ENCODE measurements at regions of chr6 and their contacts with region 1.

Region 1: GRCh38 chr6:16698997-16699868 is 62.0 kb downstream of the ATXN1 start:
- DNase-seq: peak; percentile 71
- H3K4me3 Mint-ChIP-seq: peak overlapping the region; percentile 71
- H3K27ac Mint-ChIP-seq: peak overlapping the region; percentile 95
- H3K4me1 Mint-ChIP-seq: peaks cover 68% of the 10 kb centered on the region
- H3K27me3 Mint-ChIP-seq: no peaks in the 10 kb centered on the region

Region 2: GRCh38 chr6:16731478-16732051 is 32.3 kb after region 1 on chr6:
- intact Hi-C with region 1: loop called (anchors 1 kb)
- DNase-seq: peak; percentile 80
- H3K4me3 Mint-ChIP-seq: peak overlapping the region; percentile 69
- H3K27ac Mint-ChIP-seq: peak overlapping the region; percentile 76
- H3K4me1 Mint-ChIP-seq: peaks cover 62% of the 10 kb centered on the region
- H3K27me3 Mint-ChIP-seq: no peaks in the 10 kb centered on the region

Region 3: GRCh38 chr6:16854986-16855385 is 155.8 kb after region 1 on chr6:
- intact Hi-C with region 1: no loop called
- DNase-seq: no peak
- H3K4me3 Mint-ChIP-seq: no peak overlapping the region
- H3K27ac Mint-ChIP-seq: no peak overlapping the region
- H3K4me1 Mint-ChIP-seq: peaks cover 11% of the 10 kb centered on the region
- H3K27me3 Mint-ChIP-seq: peaks cover 23% of the 10 kb centered on the region

Measured in activated CD4-positive, alpha-beta T cell treated with anti-CD3 and anti-CD28 coated beads, Interleukin-2, amount 10 ng/mL, durations not matched to agents 24 days and 14 days (primary cell).